OCI-LY7 (cell line): ENCODE measurements at regions of chr1 and their contacts with region 1.

Region 1: DNA sequence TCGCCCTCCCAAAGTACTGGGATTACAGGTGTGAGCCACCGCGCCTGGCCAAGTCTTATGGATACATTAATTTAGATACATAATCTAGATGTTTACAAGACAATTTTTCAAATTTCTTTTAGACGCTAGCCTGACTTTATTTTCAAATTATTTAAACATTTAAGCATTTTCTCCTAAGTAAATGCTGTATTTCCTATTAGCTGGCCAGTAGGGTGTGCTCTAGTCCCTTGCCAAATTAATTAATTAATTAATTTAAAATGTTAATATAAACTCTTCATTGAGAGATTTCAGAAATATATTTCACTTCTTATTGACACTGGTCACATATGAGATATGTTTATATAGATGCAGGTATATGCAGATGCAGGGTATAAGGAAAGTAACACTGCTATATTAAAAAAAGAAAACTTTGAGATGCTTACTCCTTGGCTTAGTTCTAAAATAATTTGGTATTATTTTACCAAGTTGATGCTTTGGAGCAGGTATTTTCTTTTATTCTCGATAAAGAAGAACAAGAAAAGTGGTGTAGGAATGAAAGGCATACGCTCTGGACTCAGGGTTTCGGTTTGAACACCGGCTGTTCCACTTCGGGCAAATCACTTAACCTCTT is 5.2 kb upstream of the ERRFI1 start:
- DNase-seq: peak; percentile 37
- H3K4me3 ChIP-seq: no peak overlapping the region
- H3K27ac ChIP-seq: no peak overlapping the region
- H3K4me1 ChIP-seq: no peaks in the 10 kb centered on the region
- CTCF ChIP-seq: peak; percentile 83

Region 2: GRCh38 chr1:8182034-8182761 is 150.9 kb after region 1 on chr1:
- CTCF ChIA-PET with region 1: no interaction called
- POLR2A ChIA-PET with region 1: no interaction called
- intact Hi-C with region 1: loop called (anchors 10 kb)
- DNase-seq: no peak
- H3K4me3 ChIP-seq: no peak overlapping the region
- H3K27ac ChIP-seq: no peak overlapping the region
- H3K4me1 ChIP-seq: no peaks in the 10 kb centered on the region
- CTCF ChIP-seq: no peak